OCI-LY7 (cell line): ENCODE measurements at regions of chr19 and their contacts with region 1.

Region 1: GRCh38 chr19:14031719-14032480 is at the start of gene IL27RA:
- DNase-seq: peak; percentile 85
- H3K4me3 ChIP-seq: peak within 1 kb of the TSS; percentile 71
- H3K27ac ChIP-seq: peak within 1 kb of the TSS; percentile 45
- H3K4me1 ChIP-seq: peaks cover 14% of the 10 kb centered on the region
- CTCF ChIP-seq: peak; percentile 88
- total RNA-seq, gene IL27RA: 5.2 and 6.7 TPM in 2 replicates

Region 2: GRCh38 chr19:13902993-13903614 is 128.8 kb before region 1 on chr19:
- CTCF ChIA-PET with region 1: no interaction called
- POLR2A ChIA-PET with region 1: interaction called, 5 read pairs
- intact Hi-C with region 1: loop called (anchors 5 kb)
- DNase-seq: peak; percentile 51
- H3K4me3 ChIP-seq: no peak overlapping the region
- H3K27ac ChIP-seq: no peak overlapping the region
- H3K4me1 ChIP-seq: peaks cover 11% of the 10 kb centered on the region
- CTCF ChIP-seq: peak; percentile 79

Region 3: GRCh38 chr19:13952154-13953035 is 79.5 kb before region 1 on chr19 and contains the start of gene DCAF15:
- CTCF ChIA-PET with region 1: no interaction called
- POLR2A ChIA-PET with region 1: no interaction called
- intact Hi-C with region 1: loop called (anchors 5 kb)
- DNase-seq: peak; percentile 100
- H3K4me3 ChIP-seq: peak within 1 kb of the TSS; percentile 85
- H3K27ac ChIP-seq: peak within 1 kb of the TSS; percentile 41
- H3K4me1 ChIP-seq: peaks cover 16% of the 10 kb centered on the region
- CTCF ChIP-seq: no peak
- total RNA-seq, gene DCAF15: 61.0 and 71.3 TPM in 2 replicates

Region 4: DNA sequence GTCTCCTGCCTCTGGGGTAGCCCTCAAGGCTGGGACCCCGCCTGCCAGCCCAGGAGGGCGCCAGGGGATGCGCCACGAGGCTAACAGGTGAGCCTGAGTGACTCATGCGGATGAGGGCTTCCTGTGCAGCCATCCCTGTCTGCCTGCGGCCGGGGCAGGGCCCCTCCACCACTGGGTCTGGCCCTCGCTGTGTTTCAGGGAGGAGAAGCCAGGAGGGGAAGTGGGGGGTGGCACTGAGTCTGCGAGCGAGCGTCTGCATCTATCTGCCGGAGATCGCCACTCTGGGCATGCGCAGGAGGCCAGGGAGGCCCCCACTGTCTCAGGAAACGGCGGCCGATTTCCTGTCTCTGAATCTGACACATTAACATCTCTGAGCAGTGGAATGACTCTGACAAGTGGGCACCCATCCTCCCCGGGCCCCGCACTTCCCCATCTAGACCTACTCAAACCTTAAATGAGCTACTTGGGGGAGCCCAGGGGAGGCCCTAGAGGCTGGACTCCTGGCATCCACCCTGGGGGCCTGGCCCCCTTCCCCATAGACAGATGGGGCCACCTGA is 45.5 kb before region 1 on chr19:
- CTCF ChIA-PET with region 1: no interaction called
- POLR2A ChIA-PET with region 1: no interaction called
- intact Hi-C with region 1: loop called (anchors 1 kb)
- DNase-seq: peak; percentile 98
- H3K4me3 ChIP-seq: peak overlapping the region; percentile 67
- H3K27ac ChIP-seq: peak overlapping the region; percentile 99
- H3K4me1 ChIP-seq: peaks cover 78% of the 10 kb centered on the region
- CTCF ChIP-seq: no peak

Region 5: DNA sequence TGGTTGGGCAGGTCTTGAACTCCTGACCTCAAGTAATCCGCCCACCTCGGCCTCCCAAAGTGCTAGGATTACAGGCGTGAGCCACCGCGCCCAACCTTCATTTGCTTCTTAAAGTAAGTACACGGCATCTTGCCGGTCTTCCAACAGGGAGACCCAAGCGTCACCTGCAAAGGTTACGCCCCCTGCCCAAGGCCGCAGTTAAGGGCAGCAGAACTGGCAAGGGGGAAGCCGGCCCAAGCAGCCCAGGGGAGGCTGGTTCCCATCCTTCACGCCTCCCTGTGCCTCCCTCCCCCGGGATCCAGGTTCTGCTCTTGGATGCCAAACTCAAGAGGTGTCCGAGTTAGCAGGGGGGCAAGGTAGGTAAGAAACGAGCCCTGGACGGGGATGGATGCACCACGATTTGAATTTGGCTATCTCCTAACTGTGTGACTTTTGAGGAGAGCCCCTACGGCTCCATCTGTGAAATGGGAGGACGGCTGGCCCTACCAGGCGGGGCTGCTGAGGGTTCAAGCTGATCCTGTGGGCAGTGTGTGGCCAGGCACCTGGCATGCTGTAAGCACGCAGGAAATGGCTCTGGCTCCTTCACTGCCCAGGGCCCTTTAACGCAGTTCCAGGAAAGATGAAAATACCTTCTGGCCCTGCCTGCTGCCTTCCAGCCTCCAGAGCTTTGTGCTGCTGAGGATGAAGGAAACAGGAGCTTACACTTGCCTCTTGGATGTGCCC is 34.8 kb before region 1 on chr19:
- CTCF ChIA-PET with region 1: no interaction called
- POLR2A ChIA-PET with region 1: no interaction called
- intact Hi-C with region 1: no loop called
- DNase-seq: no peak
- H3K4me3 ChIP-seq: no peak overlapping the region
- H3K27ac ChIP-seq: no peak overlapping the region
- H3K4me1 ChIP-seq: peaks cover 18% of the 10 kb centered on the region
- CTCF ChIP-seq: no peak